ENCODE measurements at regions of chrX and their contacts with region 1.

Region 1: GRCh38 chrX:154748712-154749343 is 2.0 kb downstream of the GAB3 start:
- DNase-seq: peak; percentile 75
- ATAC-seq: peak; percentile 48
- H3K4me3 ChIP-seq: no peak overlapping the region
- H3K4me3 Mint-ChIP-seq: peak overlapping the region; percentile 50
- H3K27ac ChIP-seq: no peak overlapping the region
- H3K27ac Mint-ChIP-seq: no peak overlapping the region
- H3K4me1 ChIP-seq: peaks cover 18 to 27% of the 10 kb centered on the region in 2 donors
- H3K4me1 Mint-ChIP-seq: peaks cover 18% of the 10 kb centered on the region
- H3K27me3 ChIP-seq: no peaks in the 10 kb centered on the region
- H3K27me3 Mint-ChIP-seq: no peaks in the 10 kb centered on the region
- CTCF ChIP-seq: peak; percentile 69

Region 2: GRCh38 chrX:154714925-154715324 is 33.9 kb before region 1 on chrX:
- CTCF ChIA-PET with region 1: interaction called, 44 read pairs
- POLR2A ChIA-PET with region 1: interaction called, 7 read pairs
- intact Hi-C with region 1: loop called (anchors 2 kb)
- DNase-seq: peak; percentile 63
- ATAC-seq: peak; percentile 66
- H3K4me3 ChIP-seq: no peak overlapping the region
- H3K4me3 Mint-ChIP-seq: no peak overlapping the region
- H3K27ac ChIP-seq: no peak overlapping the region
- H3K27ac Mint-ChIP-seq: no peak overlapping the region
- H3K4me1 ChIP-seq: peaks cover 28 to 31% of the 10 kb centered on the region in 2 donors
- H3K4me1 Mint-ChIP-seq: peaks cover 50% of the 10 kb centered on the region
- H3K27me3 ChIP-seq: no peaks in the 10 kb centered on the region
- H3K27me3 Mint-ChIP-seq: no peaks in the 10 kb centered on the region
- CTCF ChIP-seq: peak; percentile 78

Region 3: GRCh38 chrX:154762523-154763289 is 13.9 kb after region 1 on chrX and contains the start of gene DKC1:
- CTCF ChIA-PET with region 1: interaction called, 24 read pairs
- POLR2A ChIA-PET with region 1: interaction called, 8 read pairs
- intact Hi-C with region 1: loop called (anchors 1 kb)
- DNase-seq: peak; percentile 96
- ATAC-seq: peak; percentile 87
- H3K4me3 ChIP-seq: peak within 1 kb of the TSS; percentile 55 to 65 (median 63)
- H3K4me3 Mint-ChIP-seq: peak within 1 kb of the TSS; percentile 88
- H3K27ac ChIP-seq: peak within 1 kb of the TSS; percentile 61 to 67
- H3K27ac Mint-ChIP-seq: peak within 1 kb of the TSS; percentile 93
- H3K4me1 ChIP-seq: peaks cover 8 to 13% of the 10 kb centered on the region in 2 donors
- H3K4me1 Mint-ChIP-seq: peaks cover 16% of the 10 kb centered on the region
- H3K27me3 ChIP-seq: no peaks in the 10 kb centered on the region
- H3K27me3 Mint-ChIP-seq: no peaks in the 10 kb centered on the region
- CTCF ChIP-seq: peak; percentile 25
- total RNA-seq, gene DKC1: 73.5 and 84.2 TPM in 2 replicates

Region 4: DNA sequence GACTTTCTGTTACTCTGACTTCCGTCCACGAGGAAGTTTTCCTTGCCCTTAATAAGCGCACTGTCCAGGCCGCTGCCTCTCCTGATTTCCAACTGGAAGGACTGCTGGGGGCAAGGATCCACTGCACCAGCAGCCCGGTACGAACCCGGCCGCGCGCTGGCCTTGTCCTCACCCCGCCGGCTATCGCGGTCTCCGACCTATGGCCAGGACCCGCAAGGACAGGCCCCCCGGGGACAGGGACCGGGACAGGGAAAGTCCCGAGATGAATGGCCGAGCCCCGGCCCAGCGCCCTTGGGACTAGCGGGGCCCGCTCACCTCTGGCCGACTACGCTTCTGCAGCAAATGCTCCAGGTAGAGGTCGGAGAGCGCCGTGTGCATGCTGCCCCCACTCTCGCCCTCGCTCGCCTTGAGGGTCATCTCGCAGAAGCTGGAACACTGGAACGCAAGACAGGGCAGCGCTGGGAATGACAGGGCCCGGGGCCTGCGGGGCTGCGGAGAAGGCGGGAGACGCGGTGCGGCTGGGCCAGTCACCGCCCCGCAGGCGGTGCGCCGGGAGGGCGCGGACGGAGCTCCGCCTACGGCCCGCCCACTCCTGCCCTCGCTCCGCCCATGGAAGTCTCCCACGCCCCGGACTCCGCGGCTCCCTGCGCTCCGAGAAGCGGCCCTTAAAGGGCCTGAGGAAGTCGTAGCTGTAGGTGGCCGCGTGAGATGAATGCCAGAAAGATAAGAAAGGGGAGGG is 56.3 kb after region 1 on chrX and contains the start of gene MPP1:
- CTCF ChIA-PET with region 1: interaction called, 5 read pairs
- POLR2A ChIA-PET with region 1: no interaction called
- intact Hi-C with region 1: loop called (anchors 1 kb)
- DNase-seq: peak; percentile 82
- ATAC-seq: peak; percentile 100
- H3K4me3 ChIP-seq: peak within 1 kb of the TSS; percentile 49 to 69 (median 65)
- H3K4me3 Mint-ChIP-seq: peak within 1 kb of the TSS; percentile 85
- H3K27ac ChIP-seq: no peak within 1 kb of the TSS
- H3K27ac Mint-ChIP-seq: peak within 1 kb of the TSS; percentile 37
- H3K4me1 ChIP-seq: peaks cover 16 to 21% of the 10 kb centered on the region in 2 donors
- H3K4me1 Mint-ChIP-seq: peaks cover 22% of the 10 kb centered on the region
- H3K27me3 ChIP-seq: no peaks in the 10 kb centered on the region
- H3K27me3 Mint-ChIP-seq: no peaks in the 10 kb centered on the region
- CTCF ChIP-seq: no peak
- total RNA-seq, gene MPP1: 7.2 and 7.7 TPM in 2 replicates

Region 5: GRCh38 chrX:154840856-154841255 is 92.0 kb after region 1 on chrX:
- CTCF ChIA-PET with region 1: interaction called, 27 read pairs
- POLR2A ChIA-PET with region 1: no interaction called
- intact Hi-C with region 1: loop called (anchors 1 kb)
- DNase-seq: peak; percentile 63
- ATAC-seq: peak; percentile 65
- H3K4me3 ChIP-seq: no peak overlapping the region
- H3K4me3 Mint-ChIP-seq: no peak overlapping the region
- H3K27ac ChIP-seq: no peak overlapping the region
- H3K27ac Mint-ChIP-seq: no peak overlapping the region
- H3K4me1 ChIP-seq: no peaks in the 10 kb centered on the region
- H3K4me1 Mint-ChIP-seq: no peaks in the 10 kb centered on the region
- H3K27me3 ChIP-seq: no peaks in the 10 kb centered on the region
- H3K27me3 Mint-ChIP-seq: no peaks in the 10 kb centered on the region
- CTCF ChIP-seq: peak; percentile 65

Region 6: DNA sequence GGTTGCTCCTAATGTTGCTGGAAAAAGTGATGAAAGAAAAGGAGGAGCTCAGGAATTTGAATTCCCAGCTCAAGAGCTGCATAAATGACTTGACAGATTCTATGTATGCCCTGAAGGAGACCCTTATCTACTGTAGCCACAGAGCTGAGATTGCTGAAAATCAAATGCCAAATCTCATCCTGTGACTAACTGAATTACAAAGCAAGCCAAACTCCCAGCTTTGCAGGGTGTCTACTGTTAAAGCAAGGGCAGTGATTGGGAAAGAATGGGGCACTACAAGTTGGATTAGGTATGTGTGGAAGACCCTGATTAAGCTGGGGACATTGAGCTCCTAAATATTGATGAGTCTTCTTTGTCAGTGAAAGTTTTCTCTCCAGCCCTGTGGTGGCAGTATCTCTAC is 106.4 kb after region 1 on chrX:
- CTCF ChIA-PET with region 1: no interaction called
- POLR2A ChIA-PET with region 1: no interaction called
- intact Hi-C with region 1: no loop called
- DNase-seq: no peak
- ATAC-seq: no peak
- H3K4me3 ChIP-seq: no peak overlapping the region
- H3K4me3 Mint-ChIP-seq: no peak overlapping the region
- H3K27ac ChIP-seq: no peak overlapping the region
- H3K27ac Mint-ChIP-seq: no peak overlapping the region
- H3K4me1 ChIP-seq: no peaks in the 10 kb centered on the region
- H3K4me1 Mint-ChIP-seq: no peaks in the 10 kb centered on the region
- H3K27me3 ChIP-seq: no peaks in the 10 kb centered on the region
- H3K27me3 Mint-ChIP-seq: no peaks in the 10 kb centered on the region
- CTCF ChIP-seq: no peak